Activated naive CD4-positive, alpha-beta T cell treated with anti-CD3 and anti-CD28 coated beads, Interleukin-2, amount 10 ng/mL, durations not matched to agents 7 days and 5 days (primary cell): ENCODE measurements at regions of chr16 and their contacts with region 1.

Region 1: GRCh38 chr16:22098405-22099255 is 6.3 kb downstream of the VWA3A start:
- DNase-seq: no peak
- H3K4me3 Mint-ChIP-seq: no peak overlapping the region
- H3K27ac Mint-ChIP-seq: no peak overlapping the region
- H3K4me1 Mint-ChIP-seq: no peaks in the 10 kb centered on the region
- H3K27me3 Mint-ChIP-seq: peaks cover 42% of the 10 kb centered on the region

Region 2: GRCh38 chr16:22001591-22001990 is 97.0 kb before region 1 on chr16:
- CTCF ChIA-PET with region 1: interaction called, 16 read pairs
- DNase-seq: no peak
- H3K4me3 Mint-ChIP-seq: no peak overlapping the region
- H3K27ac Mint-ChIP-seq: no peak overlapping the region
- H3K4me1 Mint-ChIP-seq: peaks cover 8% of the 10 kb centered on the region
- H3K27me3 Mint-ChIP-seq: peaks cover 37% of the 10 kb centered on the region

Region 3: GRCh38 chr16:22063888-22064467 is 34.7 kb before region 1 on chr16:
- CTCF ChIA-PET with region 1: no interaction called
- DNase-seq: no peak
- H3K4me3 Mint-ChIP-seq: no peak overlapping the region
- H3K27ac Mint-ChIP-seq: no peak overlapping the region
- H3K4me1 Mint-ChIP-seq: no peaks in the 10 kb centered on the region
- H3K27me3 Mint-ChIP-seq: no peaks in the 10 kb centered on the region

Region 4: DNA sequence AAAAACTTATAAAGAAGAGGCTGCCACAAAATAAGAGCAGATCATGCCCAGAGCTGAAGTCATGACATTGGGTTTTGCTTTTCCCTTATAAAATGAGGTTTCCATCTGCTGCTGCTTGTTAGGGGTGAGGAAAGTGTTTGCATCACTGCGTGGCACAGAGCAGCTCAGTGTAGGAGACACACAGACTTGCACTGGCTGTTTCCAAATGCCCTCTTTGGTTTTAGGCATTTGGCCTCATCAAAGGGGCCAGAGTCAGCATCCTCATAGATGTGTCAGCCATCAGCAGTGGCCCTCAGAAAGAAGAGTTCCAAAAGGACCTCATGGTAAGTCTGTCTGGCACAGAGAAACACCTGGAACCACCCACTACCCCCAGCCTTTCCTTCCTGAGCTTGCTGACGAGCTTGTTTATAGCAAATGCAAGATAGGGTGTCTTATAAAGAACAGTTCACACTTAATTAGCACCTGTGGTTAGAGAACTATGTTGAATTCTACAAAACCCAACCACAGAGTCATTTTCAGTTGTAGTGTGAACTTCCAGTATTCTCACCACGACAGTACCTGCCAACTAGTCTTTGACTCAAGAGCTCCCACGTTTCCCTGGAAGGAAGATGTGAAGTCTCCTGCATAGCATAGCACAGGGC is 10.7 kb after region 1 on chr16:
- CTCF ChIA-PET with region 1: interaction called, 14 read pairs
- DNase-seq: no peak
- H3K4me3 Mint-ChIP-seq: no peak overlapping the region
- H3K27ac Mint-ChIP-seq: no peak overlapping the region
- H3K4me1 Mint-ChIP-seq: no peaks in the 10 kb centered on the region
- H3K27me3 Mint-ChIP-seq: peaks cover 45% of the 10 kb centered on the region